Left ventricle myocardium inferior (tissue), 1 donor: ENCODE measurements at regions of chr6 and their contacts with region 1.

Region 1: DNA sequence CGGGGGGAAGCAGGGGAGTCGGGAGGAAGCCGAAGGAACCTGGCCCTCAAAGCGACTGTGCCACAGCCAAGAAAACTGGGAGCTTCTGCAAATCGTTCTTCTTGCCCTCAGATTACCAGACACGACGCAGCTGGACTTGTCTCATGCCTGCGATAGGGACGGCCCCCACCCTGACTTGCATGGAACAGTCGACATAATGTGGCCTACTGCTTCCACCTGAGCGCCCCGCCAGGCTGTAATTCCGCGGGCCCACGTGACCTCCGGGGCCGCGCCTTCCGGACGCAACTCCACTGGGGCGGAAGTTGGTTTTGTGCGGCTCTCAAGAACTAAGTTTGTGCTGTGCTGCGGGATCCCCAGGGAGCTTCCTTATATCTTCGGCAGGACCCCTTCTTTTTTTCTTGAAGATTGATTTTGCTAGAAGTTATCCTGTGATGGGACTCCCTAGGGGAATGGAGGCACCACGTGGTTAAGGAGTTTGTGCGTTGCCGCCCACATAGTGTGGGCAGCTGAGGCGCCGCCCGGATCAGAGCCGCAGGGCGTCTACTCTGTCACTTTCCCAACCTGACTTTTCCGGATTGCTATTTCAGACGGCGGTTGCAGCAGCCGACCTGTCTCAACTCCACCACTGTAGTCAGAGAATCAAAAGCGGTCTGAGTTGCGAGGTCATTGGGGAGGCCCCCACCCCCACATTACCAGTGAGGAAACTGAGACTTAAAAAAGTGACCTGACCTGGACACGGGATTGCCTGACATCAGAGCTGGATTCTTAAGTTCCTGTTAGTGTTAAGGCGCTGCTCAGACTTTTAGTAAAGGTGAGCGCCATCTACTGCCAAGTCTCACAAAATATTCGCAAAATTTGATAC is 540 bp upstream of the CD164 start:
- DNase-seq: peak; percentile 94
- H3K4me3 ChIP-seq: peak overlapping the region; percentile 88
- H3K27ac ChIP-seq: peak overlapping the region; percentile 98
- H3K4me1 ChIP-seq: peaks cover 59% of the 10 kb centered on the region
- H3K27me3 ChIP-seq: no peaks in the 10 kb centered on the region
- CTCF ChIP-seq: peak; percentile 64

Region 2: GRCh38 chr6:109103942-109104341 is 278.9 kb before region 1 on chr6:
- intact Hi-C with region 1: loop called (anchors 10 kb)
- DNase-seq: no peak
- H3K4me3 ChIP-seq: no peak overlapping the region
- H3K27ac ChIP-seq: no peak overlapping the region
- H3K4me1 ChIP-seq: no peaks in the 10 kb centered on the region
- H3K27me3 ChIP-seq: no peaks in the 10 kb centered on the region
- CTCF ChIP-seq: no peak

Region 3: DNA sequence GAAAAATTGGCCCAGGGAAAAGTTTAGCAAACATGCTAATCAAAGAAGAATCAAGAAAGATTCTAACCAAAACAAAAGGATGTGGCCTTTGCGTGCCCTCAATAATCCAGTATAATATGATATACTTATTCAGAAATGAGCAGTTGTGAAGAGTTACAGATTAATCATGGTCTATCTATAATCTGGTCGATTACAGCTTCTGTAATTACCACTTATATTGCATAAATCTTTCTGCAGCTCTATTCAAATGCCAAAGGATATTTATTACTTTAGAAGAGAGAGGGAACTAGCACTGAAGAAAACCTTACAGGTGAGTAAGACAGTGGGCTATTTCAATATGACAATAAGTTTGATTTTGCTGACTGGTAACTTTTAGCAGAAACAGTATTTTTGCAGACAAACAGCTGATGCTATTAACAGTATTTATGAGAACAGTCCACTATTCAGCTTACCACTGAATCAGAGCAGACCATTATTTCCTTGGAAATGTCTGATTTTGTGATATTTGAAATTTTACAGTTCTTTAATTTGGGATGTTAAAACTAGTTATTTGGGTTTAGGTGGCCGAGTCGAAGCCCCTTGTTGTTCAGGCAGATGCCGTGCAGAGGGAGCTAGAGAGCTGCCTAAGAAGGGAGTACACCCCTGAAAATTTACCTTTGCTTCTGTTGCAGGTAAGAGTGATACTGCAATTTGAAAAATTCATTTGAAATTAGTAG is 195.2 kb before region 1 on chr6:
- intact Hi-C with region 1: loop called (anchors 2 kb)
- DNase-seq: peak; percentile 20
- H3K4me3 ChIP-seq: no peak overlapping the region
- H3K27ac ChIP-seq: no peak overlapping the region
- H3K4me1 ChIP-seq: peaks cover 6% of the 10 kb centered on the region
- H3K27me3 ChIP-seq: peaks cover 13% of the 10 kb centered on the region
- CTCF ChIP-seq: peak; percentile 95

Region 4: GRCh38 chr6:109236115-109237076 is 146.4 kb before region 1 on chr6:
- intact Hi-C with region 1: no loop called
- DNase-seq: no peak
- H3K4me3 ChIP-seq: no peak overlapping the region
- H3K27ac ChIP-seq: no peak overlapping the region
- H3K4me1 ChIP-seq: peaks cover 30% of the 10 kb centered on the region
- H3K27me3 ChIP-seq: no peaks in the 10 kb centered on the region
- CTCF ChIP-seq: peak; percentile 34

Region 5: GRCh38 chr6:109428889-109429477 is 46.2 kb after region 1 on chr6:
- intact Hi-C with region 1: no loop called
- DNase-seq: no peak
- H3K4me3 ChIP-seq: peak overlapping the region; percentile 30
- H3K27ac ChIP-seq: peak overlapping the region; percentile 39
- H3K4me1 ChIP-seq: peaks cover 21% of the 10 kb centered on the region
- H3K27me3 ChIP-seq: no peaks in the 10 kb centered on the region
- CTCF ChIP-seq: no peak